Ovary (tissue), 10 donors: ENCODE measurements at regions of chr18 and their contacts with region 1.

Region 1: DNA sequence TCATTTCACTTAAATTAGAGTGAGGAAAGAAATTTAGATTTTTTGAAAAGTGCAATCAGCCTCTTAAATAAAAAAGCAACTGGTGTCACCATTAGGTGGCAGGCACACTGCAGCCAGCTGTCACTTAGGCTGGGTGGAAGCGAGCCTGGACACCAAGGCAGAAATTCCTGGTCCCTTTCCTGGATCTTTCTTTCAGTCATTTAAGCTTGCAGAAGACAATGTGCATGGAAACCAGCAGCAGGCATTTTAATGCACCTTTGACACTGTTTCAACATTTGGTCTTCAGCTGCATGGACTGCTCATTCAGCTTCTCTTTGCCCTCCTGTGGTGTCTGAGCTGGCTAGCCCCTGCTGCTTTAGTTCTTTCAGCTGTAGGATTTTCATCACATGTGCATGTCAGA is 61.0 kb downstream of the AQP4 start:
- DNase-seq: no peak
- H3K4me3 ChIP-seq: no peak overlapping the region
- H3K27ac ChIP-seq: no peak overlapping the region
- H3K4me1 ChIP-seq: no peaks in the 10 kb centered on the region
- H3K27me3 ChIP-seq: no peaks in the 10 kb centered on the region
- CTCF ChIP-seq: no peak
- EP300 ChIP-seq: no peak
- POLR2A ChIP-seq: no peak

Region 2: GRCh38 chr18:26956863-26957262 is 152.3 kb after region 1 on chr18:
- intact Hi-C with region 1: loop called in 1 of 4 experiments (anchors 10 kb)
- DNase-seq: no peak
- H3K4me3 ChIP-seq: no peak overlapping the region
- H3K27ac ChIP-seq: no peak overlapping the region
- H3K4me1 ChIP-seq: no peaks in the 10 kb centered on the region
- H3K27me3 ChIP-seq: no peaks in the 10 kb centered on the region
- CTCF ChIP-seq: no peak
- EP300 ChIP-seq: no peak
- POLR2A ChIP-seq: no peak

Region 3: DNA sequence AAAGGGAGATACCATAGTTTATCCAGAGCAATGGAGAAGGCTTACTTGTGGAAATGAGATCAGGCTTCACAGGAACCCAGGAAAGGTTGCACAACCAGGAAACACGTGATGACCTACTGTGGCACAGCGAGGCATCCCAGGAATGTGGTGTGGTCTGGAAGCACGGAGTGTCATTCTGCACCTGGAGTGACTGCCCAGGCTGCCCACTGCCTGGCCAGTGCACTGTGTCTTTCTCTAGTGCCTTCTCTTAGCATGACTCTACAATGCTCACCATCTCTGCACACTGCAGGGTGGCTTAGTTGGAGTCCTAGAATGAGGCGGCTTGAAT is 331.7 kb after region 1 on chr18:
- intact Hi-C with region 1: no loop called
- DNase-seq: no peak
- H3K4me3 ChIP-seq: no peak overlapping the region
- H3K27ac ChIP-seq: no peak overlapping the region
- H3K4me1 ChIP-seq: no peaks in the 10 kb centered on the region
- H3K27me3 ChIP-seq: no peaks in the 10 kb centered on the region
- CTCF ChIP-seq: no peak
- EP300 ChIP-seq: no peak
- POLR2A ChIP-seq: no peak